CD8-positive, alpha-beta T cell (primary cell): ENCODE measurements at regions of chr18 and their contacts with region 1.

Region 1: GRCh38 chr18:26215247-26215970 is 10.8 kb upstream of the TAF4B start:
- DNase-seq: peak; percentile 2 to 87 (median 50)
- ATAC-seq: peak; percentile 96
- H3K4me3 ChIP-seq: peak overlapping the region in 1 of 2 experiments; percentile 20
- H3K4me3 Mint-ChIP-seq: peak overlapping the region; percentile 62
- H3K27ac ChIP-seq: peak overlapping the region in 1 of 2 experiments; percentile 57
- H3K27ac Mint-ChIP-seq: peak overlapping the region; percentile 79
- H3K4me1 ChIP-seq: peaks cover 19% of the 10 kb centered on the region
- H3K4me1 Mint-ChIP-seq: peaks cover 33% of the 10 kb centered on the region
- H3K27me3 ChIP-seq: no peaks in the 10 kb centered on the region
- H3K27me3 Mint-ChIP-seq: no peaks in the 10 kb centered on the region
- CTCF ChIP-seq: no peak

Region 2: GRCh38 chr18:26190506-26190905 is 24.9 kb before region 1 on chr18:
- CTCF ChIA-PET with region 1: interaction called, 3 read pairs
- POLR2A ChIA-PET with region 1: interaction called, 5 read pairs
- intact Hi-C with region 1: loop called in 1 of 2 experiments (anchors 2 kb)
- DNase-seq: peak in 8 of 9 experiments; percentile 2 to 69 (median 37)
- ATAC-seq: peak; percentile 90
- H3K4me3 ChIP-seq: peak overlapping the region; percentile 24 to 40
- H3K4me3 Mint-ChIP-seq: peak overlapping the region; percentile 81
- H3K27ac ChIP-seq: peak overlapping the region; percentile 35 to 52
- H3K27ac Mint-ChIP-seq: peak overlapping the region; percentile 89
- H3K4me1 ChIP-seq: peaks cover 4% of the 10 kb centered on the region
- H3K4me1 Mint-ChIP-seq: peaks cover 25% of the 10 kb centered on the region
- H3K27me3 ChIP-seq: no peaks in the 10 kb centered on the region
- H3K27me3 Mint-ChIP-seq: no peaks in the 10 kb centered on the region
- CTCF ChIP-seq: no peak

Region 3: DNA sequence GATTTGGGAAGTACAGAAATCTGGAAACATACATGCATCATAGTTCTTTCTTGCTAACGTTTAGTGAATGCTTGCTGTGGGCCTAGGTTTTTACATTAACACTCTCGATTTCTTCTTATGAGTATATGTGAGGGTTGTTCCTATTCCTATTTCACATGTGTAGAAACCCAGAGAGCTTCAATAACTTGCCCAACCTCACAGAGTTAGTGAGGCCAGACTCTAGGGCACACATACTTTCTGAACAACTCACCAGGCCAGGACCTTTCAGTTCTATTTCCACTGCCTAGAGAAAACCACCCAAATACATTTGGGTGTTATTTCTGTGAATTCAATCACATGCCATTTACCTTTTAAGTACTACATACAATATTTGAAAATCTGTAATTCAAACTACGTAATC is 341.2 kb after region 1 on chr18:
- CTCF ChIA-PET with region 1: no interaction called
- POLR2A ChIA-PET with region 1: no interaction called
- intact Hi-C with region 1: no loop called
- DNase-seq: no peak
- ATAC-seq: no peak
- H3K4me3 ChIP-seq: no peak overlapping the region
- H3K4me3 Mint-ChIP-seq: no peak overlapping the region
- H3K27ac ChIP-seq: no peak overlapping the region
- H3K27ac Mint-ChIP-seq: no peak overlapping the region
- H3K4me1 ChIP-seq: no peaks in the 10 kb centered on the region
- H3K4me1 Mint-ChIP-seq: peaks cover 3% of the 10 kb centered on the region
- H3K27me3 ChIP-seq: peaks cover 2 to 3% of the 10 kb centered on the region in 2 experiments
- H3K27me3 Mint-ChIP-seq: peaks cover 33% of the 10 kb centered on the region
- CTCF ChIP-seq: no peak